Psoas muscle (tissue), 8 donors: ENCODE measurements at regions of chr10 and their contacts with region 1.

Region 1: DNA sequence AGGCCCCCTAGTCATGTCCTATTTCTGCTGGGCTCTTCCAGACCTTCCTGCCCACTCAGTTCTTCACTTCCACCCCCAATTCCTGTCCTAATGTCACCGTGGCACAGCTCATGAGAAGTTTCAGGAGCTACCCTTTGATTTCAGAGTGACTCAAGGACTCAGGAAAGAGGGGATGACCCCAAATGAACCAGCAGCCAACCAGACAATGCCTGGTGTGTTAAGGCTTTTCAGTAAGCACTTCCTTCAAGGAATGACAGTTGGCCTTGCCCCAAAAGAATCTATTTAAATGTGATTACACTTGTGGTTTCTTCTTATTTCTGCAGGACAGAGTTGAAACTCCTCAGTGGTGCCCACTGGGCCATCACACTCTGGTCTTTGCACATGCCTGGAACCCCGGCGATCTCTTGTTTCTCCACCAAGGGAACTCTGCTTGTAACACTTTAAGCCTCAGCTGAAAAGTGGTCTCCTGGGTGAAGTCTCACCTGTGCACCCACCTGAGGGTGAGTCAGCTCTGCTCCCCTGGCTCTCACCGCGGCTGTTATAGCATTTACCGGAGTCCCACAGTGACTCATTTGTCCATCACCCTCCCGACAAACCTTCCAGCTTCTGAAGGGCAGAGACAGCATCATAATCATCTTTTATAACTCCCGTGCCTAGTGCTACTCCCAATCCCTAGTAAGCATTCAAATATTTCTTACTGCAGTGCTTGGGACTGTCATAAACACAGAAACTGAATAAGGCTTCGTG is 123.0 kb upstream of the SVIL start:
- DNase-seq: no peak
- ATAC-seq: no peak
- H3K4me3 ChIP-seq: no peak overlapping the region
- H3K27ac ChIP-seq: no peak overlapping the region
- H3K4me1 ChIP-seq: no peaks in the 10 kb centered on the region
- H3K27me3 ChIP-seq: no peaks in the 10 kb centered on the region
- CTCF ChIP-seq: no peak

Region 2: GRCh38 chr10:28190196-28190595 is 1567.5 kb before region 1 on chr10:
- intact Hi-C with region 1: no loop called
- DNase-seq: no peak
- ATAC-seq: no peak
- H3K4me3 ChIP-seq: no peak overlapping the region
- H3K27ac ChIP-seq: no peak overlapping the region
- H3K4me1 ChIP-seq: no peaks in the 10 kb centered on the region
- H3K27me3 ChIP-seq: no peaks in the 10 kb centered on the region
- CTCF ChIP-seq: no peak

Region 3: DNA sequence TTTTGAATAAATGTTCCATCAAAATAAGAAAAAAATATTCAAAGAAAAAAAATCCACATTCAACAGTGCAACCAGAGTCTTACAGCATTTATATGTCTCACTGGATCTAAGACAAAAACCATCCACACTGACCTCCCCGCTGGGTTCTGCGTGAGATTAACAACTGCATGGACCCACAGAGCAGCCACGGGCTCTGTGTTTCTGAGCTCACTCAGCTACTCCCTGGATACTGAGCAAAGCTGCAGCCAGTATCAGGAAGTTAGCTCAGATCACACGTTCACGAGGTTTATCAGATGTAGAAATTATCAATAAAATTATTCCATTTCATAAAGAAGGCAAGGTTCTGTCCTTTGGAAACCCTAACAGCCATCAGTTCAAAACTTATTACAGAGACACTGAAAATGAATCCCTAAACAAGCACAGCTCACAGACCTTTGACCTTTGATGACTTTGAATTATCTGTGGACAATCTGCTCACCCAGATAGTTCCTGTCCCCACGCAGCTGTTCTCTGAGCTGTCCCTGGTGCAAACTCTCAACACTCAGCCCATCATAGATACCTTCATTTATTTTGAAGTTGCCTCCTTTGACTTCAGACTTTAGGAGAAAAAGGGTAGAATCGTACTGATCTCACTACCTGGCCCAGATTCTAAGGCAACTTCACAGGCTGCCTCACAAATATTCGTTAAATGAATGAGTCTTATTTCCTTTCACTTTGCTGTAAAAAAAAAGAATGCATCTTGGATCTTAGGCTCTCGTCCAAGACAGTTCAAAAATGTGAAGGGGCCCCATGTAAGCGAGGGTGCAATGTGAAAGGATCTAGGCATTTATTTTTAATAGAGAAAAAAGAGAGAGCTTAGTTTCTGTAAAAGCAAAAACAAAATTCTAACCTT is 55.2 kb before region 1 on chr10:
- intact Hi-C with region 1: no loop called
- DNase-seq: no peak
- ATAC-seq: peak; percentile 42 to 61 (median 54)
- H3K4me3 ChIP-seq: no peak overlapping the region
- H3K27ac ChIP-seq: peak overlapping the region; percentile 5
- H3K4me1 ChIP-seq: peaks cover 38% of the 10 kb centered on the region
- H3K27me3 ChIP-seq: no peaks in the 10 kb centered on the region
- CTCF ChIP-seq: no peak

Region 4: DNA sequence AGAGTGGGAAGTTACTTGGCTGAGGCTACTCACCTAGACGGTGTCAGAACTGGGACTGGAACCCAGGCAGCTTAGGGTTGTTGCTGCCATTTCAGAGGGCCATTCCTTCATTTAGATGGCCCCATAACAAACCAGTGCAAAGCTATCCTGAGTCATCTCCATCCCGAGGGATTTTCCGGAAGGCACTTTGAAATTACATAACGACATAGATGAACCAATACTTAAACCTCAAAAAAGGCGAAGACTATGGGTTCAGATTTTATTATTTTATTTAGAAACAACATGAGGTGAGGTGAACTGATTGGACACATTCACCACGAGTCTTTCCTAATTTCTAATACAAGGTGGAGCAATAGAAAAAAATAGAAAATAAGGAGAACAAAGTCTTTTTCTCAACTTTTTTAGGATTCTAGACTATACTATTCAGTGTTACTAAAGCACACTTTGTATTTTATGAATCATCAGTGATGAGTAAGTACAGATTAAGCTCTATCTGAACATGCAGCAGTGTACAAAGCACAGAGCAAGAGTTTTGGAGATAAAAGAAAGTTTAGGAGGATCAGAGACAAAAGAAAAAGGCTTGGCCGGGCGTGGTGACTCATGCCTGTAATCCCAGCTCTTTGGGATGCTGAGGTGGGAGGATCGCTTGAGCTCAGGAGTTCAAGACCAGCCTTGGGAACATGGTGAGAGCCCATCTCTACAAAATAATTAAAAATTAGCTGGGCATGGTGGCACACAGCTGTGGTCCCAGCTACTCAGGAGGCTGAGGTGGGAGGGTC is 43.4 kb before region 1 on chr10:
- intact Hi-C with region 1: no loop called
- DNase-seq: no peak
- ATAC-seq: peak in 2 of 4 donors; percentile 32 to 47
- H3K4me3 ChIP-seq: no peak overlapping the region
- H3K27ac ChIP-seq: no peak overlapping the region
- H3K4me1 ChIP-seq: peaks cover 50% of the 10 kb centered on the region
- H3K27me3 ChIP-seq: no peaks in the 10 kb centered on the region
- CTCF ChIP-seq: no peak

Region 5: DNA sequence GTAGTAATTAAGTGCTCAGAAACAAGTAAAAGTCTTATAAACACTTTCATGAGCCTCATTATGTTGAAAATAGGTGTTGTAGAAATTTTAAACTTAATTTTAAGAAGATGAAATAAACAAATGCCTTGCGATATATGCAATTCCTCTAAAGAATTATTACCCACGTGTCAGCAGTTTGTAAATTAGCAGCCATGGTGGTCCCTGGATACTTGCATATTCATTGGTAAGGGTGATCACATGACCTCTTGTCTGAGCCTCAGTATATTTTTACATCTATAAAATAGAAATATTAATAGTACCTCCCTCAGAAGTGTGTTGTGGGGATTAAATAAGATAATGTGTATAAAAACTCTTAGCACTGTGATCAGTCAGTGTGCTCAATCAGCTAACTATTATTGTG is 18.5 kb after region 1 on chr10:
- intact Hi-C with region 1: loop called in 1 of 2 experiments (anchors 2 kb)
- DNase-seq: no peak
- ATAC-seq: no peak
- H3K4me3 ChIP-seq: no peak overlapping the region
- H3K27ac ChIP-seq: no peak overlapping the region
- H3K4me1 ChIP-seq: peaks cover 6% of the 10 kb centered on the region
- H3K27me3 ChIP-seq: no peaks in the 10 kb centered on the region
- CTCF ChIP-seq: no peak

Region 6: GRCh38 chr10:29957907-29958356 is 200.2 kb after region 1 on chr10:
- intact Hi-C with region 1: no loop called
- DNase-seq: peak; percentile 70 to 87
- ATAC-seq: peak; percentile 51 to 82 (median 71)
- H3K4me3 ChIP-seq: no peak overlapping the region
- H3K27ac ChIP-seq: peak overlapping the region; percentile 52
- H3K4me1 ChIP-seq: peaks cover 16% of the 10 kb centered on the region
- H3K27me3 ChIP-seq: no peaks in the 10 kb centered on the region
- CTCF ChIP-seq: no peak